CD4-positive, alpha-beta memory T cell (primary cell): ENCODE measurements at regions of chr21 and their contacts with region 1.

Region 1: DNA sequence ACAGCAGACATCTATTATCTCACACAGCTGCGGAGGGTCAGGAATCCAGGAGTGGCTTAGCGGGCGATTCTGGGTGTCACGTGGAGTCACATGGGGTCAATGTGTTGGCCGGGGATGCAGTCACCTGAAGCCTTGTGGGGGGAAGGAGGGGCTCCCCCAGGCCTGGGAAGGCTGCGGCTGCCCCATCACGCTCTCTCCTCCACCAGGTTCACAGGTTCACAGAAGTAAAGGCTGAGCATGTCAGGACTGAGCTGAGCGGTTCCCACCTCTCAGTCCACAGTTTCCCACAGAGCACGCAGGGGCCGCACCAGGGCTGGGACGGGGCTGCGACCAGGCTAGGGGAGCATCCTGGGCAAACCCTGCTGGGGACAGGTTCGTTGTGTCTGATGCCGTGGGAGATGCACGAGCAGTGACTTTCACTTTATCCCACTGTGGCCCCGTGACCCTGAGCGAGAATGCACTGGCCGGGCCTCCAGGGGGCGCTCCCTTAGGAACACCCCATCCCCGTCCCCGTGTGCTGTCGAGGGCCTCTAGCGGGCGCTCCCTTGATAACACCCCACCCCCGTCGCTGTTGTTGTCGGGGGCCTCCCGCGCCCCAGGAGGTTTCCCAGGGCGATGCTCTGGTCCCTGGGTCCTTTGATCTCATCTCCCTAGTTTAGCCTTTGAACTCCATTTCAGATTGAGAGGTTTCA is 73.2 kb upstream of the TRAPPC10 start:
- DNase-seq: peak; percentile 86 to 89 (median 89)
- H3K4me3 ChIP-seq: peak overlapping the region; percentile 18 to 52
- H3K4me3 Mint-ChIP-seq: peak overlapping the region; percentile 85 to 93 (median 90)
- H3K27ac ChIP-seq: peak overlapping the region; percentile 41
- H3K27ac Mint-ChIP-seq: peak overlapping the region; percentile 64 to 91 (median 81)
- H3K4me1 ChIP-seq: peaks cover 23% of the 10 kb centered on the region
- H3K4me1 Mint-ChIP-seq: peaks cover 12 to 29% (median 17%) of the 10 kb centered on the region in 4 donors
- H3K27me3 ChIP-seq: no peaks in the 10 kb centered on the region
- H3K27me3 Mint-ChIP-seq: no peaks in the 10 kb centered on the region

Region 2: DNA sequence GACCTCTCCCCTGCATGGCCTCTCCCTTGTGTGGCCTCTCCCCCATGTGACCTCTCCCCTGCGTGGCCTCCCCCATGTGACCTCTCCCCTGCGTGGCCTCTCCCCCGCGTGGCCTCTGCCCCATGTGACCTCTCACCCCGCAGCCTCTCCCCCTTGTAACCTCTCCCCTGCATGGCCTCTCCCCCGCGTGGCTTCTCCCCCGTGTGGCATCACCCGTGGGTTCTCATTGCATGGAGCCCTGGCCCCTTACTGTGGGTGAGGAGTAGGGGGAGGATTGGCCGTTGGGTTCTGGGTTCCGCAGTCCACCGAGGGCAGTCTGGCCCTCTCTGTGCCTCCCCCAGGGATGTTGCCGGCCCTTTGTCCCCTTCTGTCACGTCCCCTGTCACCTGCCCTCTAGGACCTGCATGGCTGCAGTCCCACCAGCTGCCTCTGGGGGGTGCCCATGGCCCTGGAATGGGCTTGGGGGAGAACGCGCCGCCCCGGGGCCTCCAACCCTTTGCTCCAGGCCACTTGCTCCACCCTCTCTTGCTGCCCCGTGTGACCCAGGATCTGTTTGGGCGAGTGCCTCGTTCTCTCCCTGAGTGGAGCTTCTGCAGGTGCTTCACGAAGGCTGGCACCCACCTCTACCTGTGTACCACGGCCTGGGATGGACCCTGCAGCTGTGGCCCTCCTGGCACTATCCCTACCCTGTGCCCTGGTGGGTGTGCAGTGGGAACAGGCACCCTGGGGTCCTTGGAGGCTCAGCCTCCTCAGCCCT is 128.2 kb before region 1 on chr21:
- CTCF ChIA-PET with region 1: interaction called, 39 read pairs
- POLR2A ChIA-PET with region 1: interaction called, 3 read pairs
- intact Hi-C with region 1: loop called (anchors 1 kb)
- DNase-seq: peak; percentile 77 to 85 (median 78)
- H3K4me3 ChIP-seq: no peak overlapping the region
- H3K4me3 Mint-ChIP-seq: peak overlapping the region in 1 of 8 donors; percentile 20
- H3K27ac ChIP-seq: no peak overlapping the region
- H3K27ac Mint-ChIP-seq: peak overlapping the region in 1 of 7 donors; percentile 30
- H3K4me1 ChIP-seq: peaks cover 8% of the 10 kb centered on the region
- H3K4me1 Mint-ChIP-seq: peaks cover 6 to 15% (median 7%) of the 10 kb centered on the region in 4 donors
- H3K27me3 ChIP-seq: no peaks in the 10 kb centered on the region
- H3K27me3 Mint-ChIP-seq: peaks cover 0 to 2% of the 10 kb centered on the region in 2 donors

Region 3: DNA sequence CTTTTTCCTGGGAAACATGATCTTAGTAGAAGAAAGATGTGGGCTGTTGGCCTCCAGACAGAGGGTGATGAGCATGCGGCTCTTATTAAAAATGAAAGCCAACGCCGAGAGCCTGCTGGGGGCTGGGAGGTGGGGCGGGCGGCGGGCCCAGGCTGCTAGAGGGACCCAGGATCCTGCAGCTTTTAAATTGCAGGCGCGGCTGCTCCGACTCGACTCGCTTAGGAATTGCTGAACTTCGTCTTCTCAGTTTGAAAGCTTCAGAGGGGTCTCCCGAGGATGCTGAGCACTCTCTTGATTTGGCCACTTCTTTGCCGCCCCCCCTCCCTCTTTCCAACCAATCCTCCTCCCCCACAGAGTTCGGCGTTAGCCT is 72.7 kb before region 1 on chr21:
- CTCF ChIA-PET with region 1: interaction called, 4 read pairs
- POLR2A ChIA-PET with region 1: no interaction called
- intact Hi-C with region 1: loop called (anchors 1 kb)
- DNase-seq: peak; percentile 29 to 63 (median 47)
- H3K4me3 ChIP-seq: peak overlapping the region; percentile 62 to 69
- H3K4me3 Mint-ChIP-seq: peak overlapping the region; percentile 84 to 92 (median 88)
- H3K27ac ChIP-seq: peak overlapping the region; percentile 72
- H3K27ac Mint-ChIP-seq: peak overlapping the region; percentile 93 to 99 (median 95)
- H3K4me1 ChIP-seq: peaks cover 40% of the 10 kb centered on the region
- H3K4me1 Mint-ChIP-seq: peaks cover 33 to 53% (median 44%) of the 10 kb centered on the region in 4 donors
- H3K27me3 ChIP-seq: no peaks in the 10 kb centered on the region
- H3K27me3 Mint-ChIP-seq: peaks cover 0 to under 1% of the 10 kb centered on the region in 2 donors

Region 4: GRCh38 chr21:43893536-43894205 is 45.2 kb before region 1 on chr21:
- CTCF ChIA-PET with region 1: interaction called, 8 read pairs
- POLR2A ChIA-PET with region 1: interaction called, 3 read pairs
- intact Hi-C with region 1: loop called (anchors 5 kb)
- DNase-seq: peak in 1 of 5 donors; percentile 8
- H3K4me3 ChIP-seq: peak overlapping the region in 1 of 2 donors; percentile 3
- H3K4me3 Mint-ChIP-seq: peak overlapping the region; percentile 37 to 84 (median 72)
- H3K27ac ChIP-seq: peak overlapping the region; percentile 27
- H3K27ac Mint-ChIP-seq: peak overlapping the region; percentile 49 to 95 (median 87)
- H3K4me1 ChIP-seq: peaks cover 43% of the 10 kb centered on the region
- H3K4me1 Mint-ChIP-seq: peaks cover 28 to 54% (median 42%) of the 10 kb centered on the region in 4 donors
- H3K27me3 ChIP-seq: no peaks in the 10 kb centered on the region
- H3K27me3 Mint-ChIP-seq: no peaks in the 10 kb centered on the region

Region 5: GRCh38 chr21:43916691-43917514 is 22.0 kb before region 1 on chr21:
- CTCF ChIA-PET with region 1: interaction called, 6 read pairs
- POLR2A ChIA-PET with region 1: no interaction called
- intact Hi-C with region 1: loop called (anchors 2 kb)
- DNase-seq: peak; percentile 68 to 85 (median 75)
- H3K4me3 ChIP-seq: peak overlapping the region; percentile 5 to 51
- H3K4me3 Mint-ChIP-seq: peak overlapping the region; percentile 85 to 96 (median 90)
- H3K27ac ChIP-seq: peak overlapping the region; percentile 62
- H3K27ac Mint-ChIP-seq: peak overlapping the region; percentile 83 to 99 (median 95)
- H3K4me1 ChIP-seq: peaks cover 53% of the 10 kb centered on the region
- H3K4me1 Mint-ChIP-seq: peaks cover 43 to 74% (median 61%) of the 10 kb centered on the region in 4 donors
- H3K27me3 ChIP-seq: no peaks in the 10 kb centered on the region
- H3K27me3 Mint-ChIP-seq: no peaks in the 10 kb centered on the region

Region 6: GRCh38 chr21:43975495-43975993 is 36.6 kb after region 1 on chr21:
- CTCF ChIA-PET with region 1: interaction called, 13 read pairs
- POLR2A ChIA-PET with region 1: no interaction called
- intact Hi-C with region 1: loop called (anchors 1 kb)
- DNase-seq: peak; percentile 73 to 83 (median 77)
- H3K4me3 ChIP-seq: no peak overlapping the region
- H3K4me3 Mint-ChIP-seq: no peak overlapping the region
- H3K27ac ChIP-seq: no peak overlapping the region
- H3K27ac Mint-ChIP-seq: peak overlapping the region in 4 of 7 donors; percentile 0 to 97 (median 72)
- H3K4me1 ChIP-seq: peaks cover 3% of the 10 kb centered on the region
- H3K4me1 Mint-ChIP-seq: peaks cover 11 to 18% (median 13%) of the 10 kb centered on the region in 4 donors
- H3K27me3 ChIP-seq: no peaks in the 10 kb centered on the region
- H3K27me3 Mint-ChIP-seq: no peaks in the 10 kb centered on the region